Sigmoid colon (tissue), 7 donors: ENCODE measurements at regions of chr5 and their contacts with region 1.

Region 1: GRCh38 chr5:26192496-26192895 is 845.9 kb downstream of the CDH9 start:
- DNase-seq: no peak
- H3K4me3 ChIP-seq: no peak overlapping the region
- H3K27ac ChIP-seq: no peak overlapping the region
- H3K4me1 ChIP-seq: no peaks in the 10 kb centered on the region
- H3K27me3 ChIP-seq: no peaks in the 10 kb centered on the region
- CTCF ChIP-seq: no peak
- EP300 ChIP-seq: no peak
- POLR2A ChIP-seq: no peak

Region 2: GRCh38 chr5:26181582-26181981 is 10.9 kb before region 1 on chr5:
- intact Hi-C with region 1: loop called (anchors 1 kb)
- DNase-seq: no peak
- H3K4me3 ChIP-seq: no peak overlapping the region
- H3K27ac ChIP-seq: no peak overlapping the region
- H3K4me1 ChIP-seq: no peaks in the 10 kb centered on the region
- H3K27me3 ChIP-seq: no peaks in the 10 kb centered on the region
- CTCF ChIP-seq: no peak
- EP300 ChIP-seq: no peak
- POLR2A ChIP-seq: no peak

Region 3: GRCh38 chr5:26791433-26791832 is 598.9 kb after region 1 on chr5:
- intact Hi-C with region 1: no loop called
- DNase-seq: no peak
- H3K4me3 ChIP-seq: no peak overlapping the region
- H3K27ac ChIP-seq: no peak overlapping the region
- H3K4me1 ChIP-seq: no peaks in the 10 kb centered on the region
- H3K27me3 ChIP-seq: no peaks in the 10 kb centered on the region
- CTCF ChIP-seq: no peak
- EP300 ChIP-seq: no peak
- POLR2A ChIP-seq: no peak